CD8-positive, alpha-beta T cell (primary cell): ENCODE measurements at regions of chr11 and their contacts with region 1.

Region 1: GRCh38 chr11:34881900-34882299 is 34.3 kb downstream of the APIP start:
- DNase-seq: no peak
- ATAC-seq: no peak
- H3K4me3 ChIP-seq: no peak overlapping the region
- H3K4me3 Mint-ChIP-seq: no peak overlapping the region
- H3K27ac ChIP-seq: no peak overlapping the region
- H3K27ac Mint-ChIP-seq: no peak overlapping the region
- H3K4me1 ChIP-seq: no peaks in the 10 kb centered on the region
- H3K4me1 Mint-ChIP-seq: no peaks in the 10 kb centered on the region
- H3K27me3 ChIP-seq: no peaks in the 10 kb centered on the region
- H3K27me3 Mint-ChIP-seq: no peaks in the 10 kb centered on the region
- CTCF ChIP-seq: no peak

Region 2: DNA sequence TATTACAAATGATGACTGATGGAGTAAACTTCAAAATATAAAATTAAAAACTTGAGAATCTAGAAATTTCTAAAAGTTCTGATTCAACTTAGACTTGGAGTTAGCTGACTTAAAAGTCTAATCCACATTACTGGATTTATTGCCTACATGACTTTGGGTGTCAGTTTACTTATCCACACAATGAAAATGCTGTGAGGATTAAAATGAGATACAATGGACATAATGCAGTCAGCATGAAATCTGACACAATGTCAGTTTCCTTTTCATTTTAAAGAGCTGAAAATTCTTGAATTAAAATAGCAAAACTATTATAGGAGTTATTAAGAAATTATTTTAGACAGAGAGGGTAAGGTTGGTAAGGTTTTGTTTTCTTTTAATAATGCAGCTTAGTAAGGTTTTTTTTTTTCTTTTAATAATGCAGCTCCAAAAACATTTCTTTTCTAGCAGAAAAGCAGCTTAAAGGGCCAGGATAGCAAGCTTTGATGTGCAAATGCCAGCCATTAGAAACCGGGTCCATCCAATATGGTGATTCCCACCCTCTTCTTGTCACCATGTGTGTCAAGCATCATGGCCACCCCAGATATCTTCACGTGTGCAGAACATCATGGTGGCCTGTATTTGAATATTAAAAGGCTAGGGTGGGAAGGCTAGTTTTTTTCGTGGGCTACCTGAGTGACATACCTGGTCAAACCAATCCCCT is 15.4 kb after region 1 on chr11:
- CTCF ChIA-PET with region 1: interaction called, 3 read pairs
- POLR2A ChIA-PET with region 1: no interaction called
- intact Hi-C with region 1: loop called in 1 of 2 experiments (anchors 2 kb)
- DNase-seq: no peak
- ATAC-seq: no peak
- H3K4me3 ChIP-seq: no peak overlapping the region
- H3K4me3 Mint-ChIP-seq: no peak overlapping the region
- H3K27ac ChIP-seq: no peak overlapping the region
- H3K27ac Mint-ChIP-seq: no peak overlapping the region
- H3K4me1 ChIP-seq: no peaks in the 10 kb centered on the region
- H3K4me1 Mint-ChIP-seq: no peaks in the 10 kb centered on the region
- H3K27me3 ChIP-seq: no peaks in the 10 kb centered on the region
- H3K27me3 Mint-ChIP-seq: no peaks in the 10 kb centered on the region
- CTCF ChIP-seq: no peak

Region 3: GRCh38 chr11:34977089-34977906 is 95.4 kb after region 1 on chr11:
- CTCF ChIA-PET with region 1: no interaction called
- POLR2A ChIA-PET with region 1: no interaction called
- intact Hi-C with region 1: no loop called
- DNase-seq: no peak
- ATAC-seq: no peak
- H3K4me3 ChIP-seq: no peak overlapping the region
- H3K4me3 Mint-ChIP-seq: no peak overlapping the region
- H3K27ac ChIP-seq: no peak overlapping the region
- H3K27ac Mint-ChIP-seq: no peak overlapping the region
- H3K4me1 ChIP-seq: no peaks in the 10 kb centered on the region
- H3K4me1 Mint-ChIP-seq: peaks cover 16% of the 10 kb centered on the region
- H3K27me3 ChIP-seq: no peaks in the 10 kb centered on the region
- H3K27me3 Mint-ChIP-seq: no peaks in the 10 kb centered on the region
- CTCF ChIP-seq: no peak